Heart left ventricle (tissue), 16 donors: ENCODE measurements at regions of chr20 and their contacts with region 1.

Region 1: GRCh38 chr20:45971675-45972499 is at the start of gene ZNF335:
- DNase-seq: peak; percentile 96 to 98 (median 97)
- ATAC-seq: peak; percentile 92 to 96 (median 94)
- H3K4me3 ChIP-seq: peak within 1 kb of the TSS; percentile 70 to 97 (median 84)
- H3K27ac ChIP-seq: peak within 1 kb of the TSS; percentile 90 to 100 (median 98)
- H3K4me1 ChIP-seq: peaks cover 0 to 35% (median 13%) of the 10 kb centered on the region in 12 donors
- H3K27me3 ChIP-seq: no peaks in the 10 kb centered on the region
- CTCF ChIP-seq: peak; percentile 29 to 71 (median 44)
- POLR2A ChIP-seq: peak in 1 of 2 donors; percentile 66
- total RNA-seq, gene ZNF335: 5.6 to 14.9 (median 8.5) TPM

Region 2: DNA sequence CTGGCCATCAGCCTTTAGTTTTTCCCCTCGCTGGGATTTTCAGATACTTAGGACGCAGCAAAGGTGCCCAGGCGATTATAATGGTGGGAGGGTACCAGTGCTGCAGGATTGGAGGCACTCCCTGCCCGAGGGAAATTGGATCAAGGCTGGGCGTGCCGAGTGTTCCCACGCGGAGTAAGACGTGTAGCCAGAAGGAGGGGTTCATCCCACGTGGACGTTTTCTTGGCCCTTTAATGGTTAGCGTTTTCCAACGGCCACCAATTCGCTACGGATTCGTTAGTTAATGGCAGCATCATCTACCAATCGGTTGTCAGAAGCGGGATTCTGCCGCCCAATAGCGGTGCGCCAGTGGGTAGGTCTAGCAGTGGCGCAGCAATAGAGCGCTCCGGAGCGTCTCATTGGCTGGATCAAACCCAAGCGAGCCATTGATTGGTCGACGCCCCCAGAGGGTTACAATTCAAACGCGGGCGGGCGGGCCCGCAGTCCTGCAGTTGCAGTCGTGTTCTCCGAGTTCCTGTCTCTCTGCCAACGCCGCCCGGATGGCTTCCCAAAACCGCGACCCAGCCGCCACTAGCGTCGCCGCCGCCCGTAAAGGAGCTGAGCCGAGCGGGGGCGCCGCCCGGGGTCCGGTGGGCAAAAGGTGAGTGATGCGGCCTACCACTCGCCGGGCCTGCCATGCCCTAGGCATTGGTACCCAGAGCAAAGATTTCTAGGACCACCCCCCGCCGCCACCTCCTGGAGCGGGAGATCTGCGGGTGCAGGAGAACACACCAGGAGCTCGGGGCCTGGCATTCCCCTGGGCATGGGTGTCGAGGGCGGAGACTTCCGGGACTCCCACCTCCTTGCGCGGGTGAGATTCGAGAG is 159.5 kb before region 1 on chr20 and contains the start of gene UBE2C:
- intact Hi-C with region 1: loop called in 2 of 10 experiments (anchors 5 to 10 kb)
- DNase-seq: peak; percentile 96 to 98 (median 98)
- ATAC-seq: peak; percentile 99
- H3K4me3 ChIP-seq: peak within 1 kb of the TSS; percentile 30 to 76 (median 56)
- H3K27ac ChIP-seq: peak within 1 kb of the TSS in 6 of 12 donors; percentile 16 to 61 (median 34)
- H3K4me1 ChIP-seq: peaks cover 0 to 13% (median 6%) of the 10 kb centered on the region in 12 donors
- H3K27me3 ChIP-seq: no peaks in the 10 kb centered on the region
- CTCF ChIP-seq: no peak
- POLR2A ChIP-seq: peak in 1 of 2 donors; percentile 20
- total RNA-seq, gene UBE2C: 0.32 to 16.9 (median 1.7) TPM in 5 of 9 donors, not detected in the others

Region 3: GRCh38 chr20:45890985-45891983 is 80.6 kb before region 1 on chr20 and contains the starts of genes CTSA and NEURL2:
- intact Hi-C with region 1: loop called in 2 of 10 experiments (anchors 5 to 10 kb)
- DNase-seq: peak; percentile 93 to 97 (median 95)
- ATAC-seq: peak; percentile 77 to 91 (median 86)
- H3K4me3 ChIP-seq: peak within 1 kb of the TSS; percentile 53 to 98 (median 80)
- H3K27ac ChIP-seq: peak within 1 kb of the TSS; percentile 74 to 97 (median 90)
- H3K4me1 ChIP-seq: peaks cover 3 to 37% (median 23%) of the 10 kb centered on the region in 12 donors
- H3K27me3 ChIP-seq: no peaks in the 10 kb centered on the region
- CTCF ChIP-seq: peak in 2 of 12 donors; percentile 3 to 7
- POLR2A ChIP-seq: peak in 1 of 2 donors; percentile 68
- total RNA-seq, gene CTSA: 62.5 to 214 (median 129) TPM
- total RNA-seq, gene NEURL2: 3.5 to 14.8 (median 10.8) TPM

Region 4: GRCh38 chr20:45905505-45906079 is 66.3 kb before region 1 on chr20:
- intact Hi-C with region 1: no loop called
- DNase-seq: no peak
- ATAC-seq: no peak
- H3K4me3 ChIP-seq: no peak overlapping the region
- H3K27ac ChIP-seq: no peak overlapping the region
- H3K4me1 ChIP-seq: peaks cover 0 to 12% (median 0%) of the 10 kb centered on the region in 12 donors
- H3K27me3 ChIP-seq: no peaks in the 10 kb centered on the region
- CTCF ChIP-seq: no peak
- POLR2A ChIP-seq: no peak

Region 5: GRCh38 chr20:45934586-45935415 is 37.1 kb before region 1 on chr20 and contains the start of gene PCIF1:
- intact Hi-C with region 1: loop called in 4 of 10 experiments (anchors 1 to 5 kb)
- DNase-seq: peak; percentile 98 to 99 (median 99)
- ATAC-seq: peak; percentile 90 to 91 (median 90)
- H3K4me3 ChIP-seq: peak within 1 kb of the TSS; percentile 79 to 100 (median 99)
- H3K27ac ChIP-seq: peak within 1 kb of the TSS; percentile 99 to 100 (median 100)
- H3K4me1 ChIP-seq: peaks cover 0 to 28% (median 20%) of the 10 kb centered on the region in 12 donors
- H3K27me3 ChIP-seq: no peaks in the 10 kb centered on the region
- CTCF ChIP-seq: peak in 1 of 12 donors; percentile 12
- POLR2A ChIP-seq: peak; percentile 26 to 93
- total RNA-seq, gene PCIF1: 22.2 to 40.2 (median 28.2) TPM

Region 6: GRCh38 chr20:46304361-46304760 is 332.5 kb after region 1 on chr20:
- intact Hi-C with region 1: no loop called
- DNase-seq: no peak
- ATAC-seq: no peak
- H3K4me3 ChIP-seq: no peak overlapping the region
- H3K27ac ChIP-seq: peak overlapping the region in 1 of 12 donors; percentile 51
- H3K4me1 ChIP-seq: peaks cover 0 to 22% (median 8%) of the 10 kb centered on the region in 12 donors
- H3K27me3 ChIP-seq: peaks cover 28 to 97% (median 43%) of the 10 kb centered on the region in 9 donors
- CTCF ChIP-seq: no peak
- POLR2A ChIP-seq: no peak

Region 7: GRCh38 chr20:46406199-46406985 is 434.5 kb after region 1 on chr20 and contains the start of gene ELMO2:
- intact Hi-C with region 1: loop called in 1 of 10 experiments (anchors 2 kb)
- DNase-seq: peak; percentile 98 to 99 (median 98)
- ATAC-seq: peak; percentile 93 to 98 (median 96)
- H3K4me3 ChIP-seq: peak within 1 kb of the TSS; percentile 51 to 99 (median 80)
- H3K27ac ChIP-seq: peak within 1 kb of the TSS; percentile 74 to 99 (median 95)
- H3K4me1 ChIP-seq: peaks cover 14 to 62% (median 44%) of the 10 kb centered on the region in 12 donors
- H3K27me3 ChIP-seq: no peaks in the 10 kb centered on the region
- CTCF ChIP-seq: peak; percentile 4 to 55 (median 24)
- POLR2A ChIP-seq: peak in 1 of 2 donors; percentile 78
- total RNA-seq, gene ELMO2: 22.7 to 57.5 (median 34.5) TPM